Psoas muscle (tissue), 8 donors: ENCODE measurements at regions of chr18 and their contacts with region 1.

Region 1: DNA sequence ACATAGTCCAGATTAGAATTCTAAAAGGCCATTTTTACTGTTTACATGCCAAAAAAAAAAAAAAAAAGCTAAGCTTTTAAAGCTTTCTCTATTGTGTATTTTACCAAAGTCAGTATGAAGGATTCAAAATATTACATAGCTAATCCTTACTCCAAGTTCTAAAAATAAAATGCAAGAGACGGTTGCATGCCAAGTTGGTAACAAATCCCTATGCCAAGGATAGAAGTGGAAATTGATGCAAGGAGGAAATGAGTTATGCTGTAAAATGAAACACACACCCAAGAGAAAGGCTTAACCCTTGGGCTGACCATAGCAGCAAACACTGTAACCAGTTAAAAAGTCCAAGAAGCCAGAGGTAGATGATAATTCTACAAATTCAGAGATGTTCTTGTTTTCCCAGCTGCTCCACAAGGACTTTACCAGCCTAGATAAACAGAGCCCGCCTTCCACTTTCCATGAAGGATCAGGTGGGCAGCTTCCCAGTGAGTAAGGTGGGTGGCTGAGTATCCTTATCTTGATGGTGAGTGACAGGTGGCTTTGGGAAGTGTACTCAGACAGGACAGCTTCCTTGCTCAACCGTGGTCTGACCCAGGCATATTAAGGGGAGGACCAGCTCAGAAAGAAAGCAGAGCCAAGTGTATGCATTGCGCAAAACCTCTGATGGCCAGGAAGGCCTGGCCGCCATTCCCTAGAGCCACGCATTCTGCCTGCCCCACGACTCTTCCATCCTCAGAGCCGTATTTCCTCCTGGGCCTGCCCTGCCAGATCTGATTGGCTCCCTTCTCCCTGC is 34.4 kb downstream of the ATP8B1 start:
- DNase-seq: peak in 1 of 2 donors; percentile 53
- ATAC-seq: peak; percentile 77 to 83 (median 80)
- H3K4me3 ChIP-seq: peak overlapping the region; percentile 35
- H3K27ac ChIP-seq: peak overlapping the region; percentile 88
- H3K4me1 ChIP-seq: peaks cover 63% of the 10 kb centered on the region
- H3K27me3 ChIP-seq: no peaks in the 10 kb centered on the region
- CTCF ChIP-seq: no peak

Region 2: GRCh38 chr18:57737400-57738060 is 31.2 kb before region 1 on chr18:
- intact Hi-C with region 1: no loop called
- DNase-seq: peak; percentile 75 to 78
- ATAC-seq: peak; percentile 56 to 89 (median 74)
- H3K4me3 ChIP-seq: no peak overlapping the region
- H3K27ac ChIP-seq: no peak overlapping the region
- H3K4me1 ChIP-seq: no peaks in the 10 kb centered on the region
- H3K27me3 ChIP-seq: no peaks in the 10 kb centered on the region
- CTCF ChIP-seq: no peak

Region 3: DNA sequence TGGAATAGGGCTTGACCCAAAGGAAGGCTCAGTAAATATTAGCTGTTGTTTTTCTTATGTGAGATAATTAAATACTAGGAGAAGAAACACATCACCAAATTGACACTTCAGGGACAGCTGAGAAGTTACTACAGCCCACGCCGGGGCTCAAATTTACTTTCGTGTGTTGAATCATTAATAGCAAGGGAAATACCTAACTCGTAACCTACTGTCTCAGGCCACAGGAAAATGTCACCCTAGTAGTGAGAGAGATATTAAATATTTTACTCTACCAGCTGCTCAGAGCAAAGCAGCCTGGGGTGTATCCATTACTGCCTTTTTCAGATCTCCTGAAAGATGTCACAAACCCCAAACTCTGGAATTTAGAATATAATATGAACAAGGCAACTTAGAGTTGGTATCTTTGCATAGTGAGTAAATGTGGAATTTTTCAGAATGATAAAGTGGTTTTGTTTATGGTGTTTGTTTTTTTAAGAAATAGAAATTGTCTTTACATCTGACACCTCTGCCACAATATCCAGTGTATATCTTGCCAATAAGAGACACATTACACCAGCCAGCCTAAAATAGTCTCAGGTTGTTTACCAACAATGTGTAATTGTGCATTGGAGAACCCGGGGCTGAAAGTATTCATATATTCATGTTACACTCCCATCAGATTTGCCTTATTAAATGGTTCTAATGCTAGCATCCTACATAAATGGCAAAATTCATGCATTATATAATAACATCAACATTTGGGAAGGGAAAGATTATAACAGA is 14.0 kb before region 1 on chr18:
- intact Hi-C with region 1: loop called in 1 of 2 experiments (anchors 1 kb)
- DNase-seq: no peak
- ATAC-seq: peak; percentile 59 to 83 (median 77)
- H3K4me3 ChIP-seq: no peak overlapping the region
- H3K27ac ChIP-seq: peak overlapping the region; percentile 83
- H3K4me1 ChIP-seq: peaks cover 15% of the 10 kb centered on the region
- H3K27me3 ChIP-seq: no peaks in the 10 kb centered on the region
- CTCF ChIP-seq: no peak